ENCODE measurements at regions of chr20 and their contacts with region 1.

Region 1: DNA sequence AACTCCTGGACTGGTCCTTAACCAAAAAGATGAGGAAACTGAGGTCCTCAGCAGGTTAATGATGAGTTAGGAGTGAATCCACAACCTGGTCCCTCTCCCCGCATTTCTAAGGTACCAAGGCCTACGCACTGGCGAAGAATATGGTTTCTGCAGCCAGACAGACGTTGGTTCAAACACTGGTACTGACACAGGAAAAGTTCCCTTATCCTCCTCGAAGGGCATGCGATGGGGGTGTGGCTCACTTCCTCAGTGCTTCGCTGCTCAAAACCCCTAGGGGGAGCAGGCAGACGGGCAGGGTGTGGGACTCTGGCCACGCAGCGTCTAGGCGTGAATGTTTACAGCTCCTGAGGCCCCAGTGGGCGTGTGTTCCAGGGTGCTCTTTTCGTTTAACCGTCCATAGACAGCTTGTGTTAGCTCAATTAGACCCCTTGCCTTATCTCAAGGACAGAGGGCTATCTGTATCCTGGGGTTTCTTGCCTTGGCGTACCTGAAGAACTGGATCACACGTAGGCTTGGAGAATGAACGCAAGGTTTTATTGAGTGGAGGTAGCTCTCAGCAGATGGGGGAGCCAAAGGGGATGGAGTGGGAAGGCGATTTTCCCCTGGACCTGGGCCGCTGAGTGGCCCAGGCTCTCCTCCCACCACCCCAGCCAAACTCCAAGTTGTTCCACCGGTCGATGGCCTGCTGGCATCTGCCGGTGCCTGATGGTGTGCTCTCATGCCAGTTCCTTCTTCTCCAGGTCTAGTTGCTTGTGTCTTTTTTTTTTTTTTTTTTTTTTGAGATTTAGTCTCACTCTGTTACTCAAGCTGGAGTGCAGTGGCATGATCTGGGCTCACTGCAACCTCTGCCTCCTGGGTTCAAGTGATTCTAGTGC is 31.8 kb upstream of the PTPN1 start:
- DNase-seq: peak; percentile 49 to 86
- ATAC-seq: peak; percentile 95 to 100 (median 100)
- H3K4me3 ChIP-seq: no peak overlapping the region
- H3K4me3 Mint-ChIP-seq: no peak overlapping the region
- H3K27ac ChIP-seq: no peak overlapping the region
- H3K27ac Mint-ChIP-seq: no peak overlapping the region
- H3K4me1 ChIP-seq: peaks cover 17% of the 10 kb centered on the region
- H3K4me1 Mint-ChIP-seq: peaks cover 9 to 14% of the 10 kb centered on the region in 2 donors
- H3K27me3 ChIP-seq: no peaks in the 10 kb centered on the region
- H3K27me3 Mint-ChIP-seq: peaks cover 0 to under 1% of the 10 kb centered on the region in 2 donors
- CTCF ChIP-seq: peak; percentile 77

Region 2: DNA sequence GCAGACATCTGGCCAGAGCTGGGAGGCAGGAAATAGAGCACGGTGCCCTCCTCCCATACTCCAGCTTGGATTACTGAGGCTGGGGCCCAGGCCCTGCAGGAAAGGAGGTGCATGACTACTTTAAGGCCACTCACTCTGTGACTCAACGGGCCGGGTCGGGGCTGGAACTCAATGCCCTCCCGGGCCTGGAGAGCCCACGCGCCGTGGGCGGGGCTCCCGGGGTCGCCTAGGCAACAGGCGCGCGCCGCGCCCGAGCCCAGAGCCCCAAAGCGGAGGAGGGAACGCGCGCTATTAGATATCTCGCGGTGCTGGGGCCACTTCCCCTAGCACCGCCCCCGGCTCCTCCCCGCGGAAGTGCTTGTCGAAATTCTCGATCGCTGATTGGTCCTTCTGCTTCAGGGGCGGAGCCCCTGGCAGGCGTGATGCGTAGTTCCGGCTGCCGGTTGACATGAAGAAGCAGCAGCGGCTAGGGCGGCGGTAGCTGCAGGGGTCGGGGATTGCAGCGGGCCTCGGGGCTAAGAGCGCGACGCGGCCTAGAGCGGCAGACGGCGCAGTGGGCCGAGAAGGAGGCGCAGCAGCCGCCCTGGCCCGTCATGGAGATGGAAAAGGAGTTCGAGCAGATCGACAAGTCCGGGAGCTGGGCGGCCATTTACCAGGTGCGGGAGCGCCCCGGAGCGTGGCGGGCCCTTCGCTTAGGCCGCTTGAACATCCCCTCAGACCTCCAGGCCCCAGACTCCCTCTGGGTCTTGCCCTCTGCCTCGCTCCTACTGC is 31.7 kb after region 1 on chr20 and contains the start of gene PTPN1:
- intact Hi-C with region 1: loop called (anchors 1 kb)
- DNase-seq: peak; percentile 99
- ATAC-seq: peak; percentile 96 to 99 (median 96)
- H3K4me3 ChIP-seq: peak within 1 kb of the TSS; percentile 99
- H3K4me3 Mint-ChIP-seq: peak within 1 kb of the TSS; percentile 93
- H3K27ac ChIP-seq: peak within 1 kb of the TSS; percentile 89
- H3K27ac Mint-ChIP-seq: peak within 1 kb of the TSS; percentile 95 to 98
- H3K4me1 ChIP-seq: peaks cover 24% of the 10 kb centered on the region
- H3K4me1 Mint-ChIP-seq: peaks cover 44 to 48% of the 10 kb centered on the region in 2 donors
- H3K27me3 ChIP-seq: no peaks in the 10 kb centered on the region
- H3K27me3 Mint-ChIP-seq: no peaks in the 10 kb centered on the region
- CTCF ChIP-seq: no peak
- total RNA-seq, gene PTPN1: 52.9 to 64.5 (median 58.3) TPM

Region 3: DNA sequence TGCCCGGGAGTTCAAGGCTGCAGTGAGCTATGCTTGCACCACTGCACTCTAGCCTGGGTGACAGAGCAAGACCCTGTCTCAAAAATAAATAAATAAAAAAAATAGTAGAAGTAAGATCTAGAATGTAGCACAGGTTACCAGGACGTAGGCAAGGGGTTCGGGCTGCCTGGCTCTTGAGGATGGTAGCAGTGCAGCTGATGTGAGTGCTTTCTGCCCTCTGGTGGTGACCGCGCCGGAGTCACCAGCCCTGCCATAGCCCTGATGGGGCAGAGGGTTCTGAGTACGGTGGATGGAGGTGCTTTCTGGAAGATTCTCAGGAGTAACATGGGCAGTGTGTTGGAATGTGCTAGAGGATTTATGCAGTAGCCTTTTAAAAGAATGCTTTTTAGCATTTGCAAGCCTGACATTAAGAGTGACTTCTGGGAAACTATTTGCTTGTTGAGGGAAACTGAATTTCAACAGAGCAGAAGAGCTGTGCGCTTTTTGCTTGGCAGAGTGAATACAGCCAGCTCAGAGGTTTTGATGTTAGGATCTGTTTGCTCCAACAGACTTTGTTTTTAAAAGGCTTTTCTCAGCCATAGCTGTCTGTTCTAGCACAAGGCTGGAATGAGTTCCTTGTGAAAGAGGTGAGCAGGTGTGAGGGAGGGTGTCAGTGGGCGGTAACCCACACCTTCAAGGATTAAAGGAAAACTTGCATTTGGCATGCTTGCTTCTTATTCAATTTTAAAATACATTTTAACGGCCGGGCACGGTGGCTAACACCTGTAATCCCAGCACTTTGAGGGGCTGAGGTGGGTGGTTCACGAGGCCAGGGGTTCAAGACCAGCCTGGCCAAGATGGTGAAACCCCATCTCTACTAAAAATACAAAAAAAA is 97.7 kb after region 1 on chr20:
- intact Hi-C with region 1: loop called (anchors 1 kb)
- DNase-seq: peak; percentile 40 to 77
- ATAC-seq: peak; percentile 74 to 92 (median 86)
- H3K4me3 ChIP-seq: no peak overlapping the region
- H3K4me3 Mint-ChIP-seq: no peak overlapping the region
- H3K27ac ChIP-seq: no peak overlapping the region
- H3K27ac Mint-ChIP-seq: peak overlapping the region in 1 of 2 donors; percentile 70
- H3K4me1 ChIP-seq: no peaks in the 10 kb centered on the region
- H3K4me1 Mint-ChIP-seq: peaks cover 13 to 37% of the 10 kb centered on the region in 2 donors
- H3K27me3 ChIP-seq: no peaks in the 10 kb centered on the region
- H3K27me3 Mint-ChIP-seq: no peaks in the 10 kb centered on the region
- CTCF ChIP-seq: peak; percentile 57